SK-N-SH (cell line): ENCODE measurements at regions of chr7 and their contacts with region 1.

Region 1: DNA sequence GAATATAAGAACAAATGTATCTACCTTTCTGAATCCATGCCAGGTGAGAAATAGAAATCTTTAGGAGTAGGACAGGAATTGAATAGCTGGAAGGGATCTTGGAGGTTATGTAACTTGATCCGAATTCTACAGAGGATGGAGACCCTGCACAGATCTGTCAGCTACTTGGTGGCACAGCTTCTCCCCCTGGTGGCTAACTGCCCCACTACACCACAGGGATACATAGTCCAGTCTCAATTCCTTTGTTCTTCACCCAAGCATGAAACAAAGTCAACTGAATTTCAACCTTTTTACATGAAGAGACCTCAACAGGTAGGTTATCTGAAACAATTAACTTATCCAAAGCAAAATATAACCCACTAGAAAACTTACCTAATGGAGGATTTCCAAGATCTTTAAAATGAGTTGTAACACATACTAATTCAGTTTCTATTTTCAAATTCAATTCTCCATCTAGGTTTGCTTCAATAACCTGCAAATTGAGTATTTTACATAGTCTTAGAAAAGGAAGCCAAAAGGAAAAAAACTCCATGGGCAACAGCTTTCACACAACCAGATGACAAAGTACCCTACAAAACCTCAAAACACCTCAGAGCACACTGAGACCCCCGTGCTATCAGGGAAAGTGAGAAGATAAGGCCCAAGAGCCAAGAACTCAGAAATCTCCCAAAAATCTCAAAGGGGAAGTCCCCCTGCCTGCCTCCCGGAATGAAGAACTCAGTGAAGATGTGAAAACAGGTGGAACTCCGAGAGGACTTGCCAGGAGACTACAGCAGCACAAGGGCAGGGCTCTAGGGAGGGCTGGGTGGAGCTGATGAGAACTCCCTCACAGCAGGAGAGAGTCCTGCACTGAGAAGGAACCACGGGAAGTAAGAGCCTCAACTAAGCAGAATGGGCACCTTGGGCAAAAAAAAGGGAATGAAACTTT is 10.3 kb downstream of the HUS1 start:
- DNase-seq: peak; percentile 89
- H3K4me3 ChIP-seq: no peak overlapping the region; a peak in 1 of 4 replicates
- H3K27ac ChIP-seq: no peak overlapping the region
- H3K4me1 ChIP-seq: peaks cover 0 to 2% of the 10 kb centered on the region in 2 experiments; a peak in 2 of 4 replicates
- H3K27me3 ChIP-seq: no peaks in the 10 kb centered on the region
- CTCF ChIP-seq: peak; percentile 100
- EP300 ChIP-seq: no peak
- RAD21 ChIP-seq: peak; percentile 82

Region 2: GRCh38 chr7:47418601-47419381 is 550.3 kb before region 1 on chr7:
- CTCF ChIA-PET with region 1: no interaction called
- POLR2A ChIA-PET with region 1: no interaction called
- DNase-seq: no peak
- H3K4me3 ChIP-seq: no peak overlapping the region
- H3K27ac ChIP-seq: no peak overlapping the region
- H3K4me1 ChIP-seq: peaks cover 0 to 3% of the 10 kb centered on the region in 2 experiments; a peak in 1 of 4 replicates
- H3K27me3 ChIP-seq: no peaks in the 10 kb centered on the region
- CTCF ChIP-seq: no peak
- EP300 ChIP-seq: no peak
- RAD21 ChIP-seq: no peak

Region 3: DNA sequence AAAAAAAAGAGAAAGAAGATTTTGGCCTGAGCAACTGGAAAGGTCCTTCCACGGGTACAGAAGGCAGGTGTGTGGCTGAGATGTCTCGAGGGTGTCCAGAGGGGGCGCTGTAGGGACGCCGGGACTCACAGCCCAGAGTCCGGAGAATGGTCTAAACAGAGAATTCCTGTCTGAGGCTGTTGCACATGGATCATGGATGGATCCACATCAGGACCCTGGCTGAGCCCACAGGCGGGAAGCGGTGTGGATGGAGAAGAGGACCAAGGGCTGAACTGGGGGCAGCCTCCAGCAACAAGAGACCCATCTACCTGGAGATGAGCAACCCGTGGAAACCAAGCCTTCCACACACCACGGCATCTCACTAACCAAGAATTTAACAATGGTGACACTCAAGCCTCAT is 75.9 kb before region 1 on chr7:
- CTCF ChIA-PET with region 1: no interaction called
- POLR2A ChIA-PET with region 1: no interaction called
- DNase-seq: peak; percentile 45
- H3K4me3 ChIP-seq: no peak overlapping the region
- H3K27ac ChIP-seq: no peak overlapping the region
- H3K4me1 ChIP-seq: no peaks in the 10 kb centered on the region; a peak in 1 of 4 replicates
- H3K27me3 ChIP-seq: peaks cover 21% of the 10 kb centered on the region; the same call in 1 of the 2 replicates
- CTCF ChIP-seq: peak; percentile 55
- EP300 ChIP-seq: no peak
- RAD21 ChIP-seq: no peak

Region 4: GRCh38 chr7:47937065-47937683 is 31.9 kb before region 1 on chr7:
- CTCF ChIA-PET with region 1: interaction called, 13 read pairs
- POLR2A ChIA-PET with region 1: no interaction called
- DNase-seq: no peak
- H3K4me3 ChIP-seq: no peak overlapping the region
- H3K27ac ChIP-seq: no peak overlapping the region
- H3K4me1 ChIP-seq: peaks cover 18 to 26% of the 10 kb centered on the region in 2 experiments
- H3K27me3 ChIP-seq: no peaks in the 10 kb centered on the region
- CTCF ChIP-seq: no peak
- EP300 ChIP-seq: no peak
- RAD21 ChIP-seq: no peak

Region 5: DNA sequence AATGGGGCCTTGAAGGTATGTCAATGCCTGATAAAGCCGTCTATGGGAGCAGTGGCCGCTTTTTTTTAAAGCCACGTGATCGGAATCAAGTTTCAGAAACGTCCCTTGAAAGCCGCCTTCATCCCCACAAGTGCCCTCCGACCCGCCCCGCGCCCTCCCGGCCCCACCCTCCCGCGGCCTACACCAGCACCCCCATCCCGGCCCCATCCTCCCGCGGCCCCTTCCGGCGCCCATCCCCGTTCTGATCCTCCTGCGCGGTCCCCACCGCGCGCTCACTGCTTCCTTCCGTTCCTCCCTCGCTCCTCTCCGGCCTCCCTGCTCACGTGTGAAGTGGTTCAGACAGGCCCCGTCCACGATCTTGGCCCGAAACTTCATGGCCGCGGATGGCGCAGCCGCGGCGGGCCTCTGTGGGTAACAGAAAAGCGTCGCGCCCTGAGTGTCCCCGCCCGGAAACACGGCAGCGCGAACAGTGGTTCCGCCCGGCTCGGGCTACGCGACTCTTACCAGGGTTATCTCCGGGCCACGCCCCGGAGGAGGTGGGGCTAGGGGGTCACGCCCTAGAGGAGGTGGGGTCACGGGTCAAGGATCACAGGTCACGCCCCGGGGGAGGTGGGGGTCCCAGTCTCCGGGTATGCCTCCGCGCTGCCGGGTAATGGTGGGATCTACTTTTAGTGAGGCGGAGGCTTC is 10.2 kb after region 1 on chr7 and contains the start of gene HUS1:
- CTCF ChIA-PET with region 1: interaction called, 20 read pairs
- POLR2A ChIA-PET with region 1: no interaction called
- DNase-seq: peak; percentile 98
- H3K4me3 ChIP-seq: peak within 1 kb of the TSS; percentile 75 to 87
- H3K27ac ChIP-seq: peak within 1 kb of the TSS; percentile 76 to 83
- H3K4me1 ChIP-seq: peaks cover 8% of the 10 kb centered on the region in 2 experiments; a peak in 3 of 4 replicates
- H3K27me3 ChIP-seq: no peaks in the 10 kb centered on the region
- CTCF ChIP-seq: no peak
- EP300 ChIP-seq: peak in 1 of 2 experiments; percentile 54; a peak in 1 of 4 replicates
- RAD21 ChIP-seq: no peak
- polyA plus RNA-seq, gene HUS1: 17.8 and 22.9 TPM in 2 replicates

Region 6: DNA sequence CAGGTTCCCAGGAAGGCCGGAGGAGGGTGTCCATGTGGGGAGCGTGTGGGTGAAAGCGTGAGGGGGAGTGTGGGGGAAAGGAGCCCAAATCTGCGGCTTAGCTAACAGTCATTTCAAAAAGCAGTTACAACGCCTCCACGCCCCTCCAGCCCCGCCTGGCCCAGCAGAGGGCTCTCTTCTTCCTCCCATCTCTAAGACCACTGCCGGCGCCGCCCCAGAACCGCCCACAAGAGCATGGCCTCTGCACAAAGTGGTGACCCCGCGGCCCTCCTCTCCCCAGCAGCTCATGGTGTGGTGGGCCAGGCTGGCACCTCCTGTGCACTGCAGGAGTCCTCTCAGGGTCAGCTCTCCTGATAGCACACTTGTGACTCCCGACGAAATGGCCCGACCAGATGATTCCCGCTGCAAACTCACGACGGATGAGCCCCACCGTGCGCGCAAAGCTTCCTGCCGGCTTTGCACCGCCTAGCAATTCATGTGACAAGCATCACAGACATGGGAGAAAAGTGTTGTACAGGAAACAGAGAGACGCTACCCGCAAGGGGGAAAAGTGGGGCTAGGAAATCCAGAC is 22.7 kb after region 1 on chr7:
- CTCF ChIA-PET with region 1: interaction called, 12 read pairs
- POLR2A ChIA-PET with region 1: no interaction called
- DNase-seq: peak; percentile 59
- H3K4me3 ChIP-seq: no peak overlapping the region
- H3K27ac ChIP-seq: no peak overlapping the region
- H3K4me1 ChIP-seq: no peaks in the 10 kb centered on the region; a peak in 1 of 4 replicates
- H3K27me3 ChIP-seq: no peaks in the 10 kb centered on the region; the same call in 1 of the 2 replicates
- CTCF ChIP-seq: peak; percentile 51
- EP300 ChIP-seq: no peak
- RAD21 ChIP-seq: peak; percentile 49

Region 7: DNA sequence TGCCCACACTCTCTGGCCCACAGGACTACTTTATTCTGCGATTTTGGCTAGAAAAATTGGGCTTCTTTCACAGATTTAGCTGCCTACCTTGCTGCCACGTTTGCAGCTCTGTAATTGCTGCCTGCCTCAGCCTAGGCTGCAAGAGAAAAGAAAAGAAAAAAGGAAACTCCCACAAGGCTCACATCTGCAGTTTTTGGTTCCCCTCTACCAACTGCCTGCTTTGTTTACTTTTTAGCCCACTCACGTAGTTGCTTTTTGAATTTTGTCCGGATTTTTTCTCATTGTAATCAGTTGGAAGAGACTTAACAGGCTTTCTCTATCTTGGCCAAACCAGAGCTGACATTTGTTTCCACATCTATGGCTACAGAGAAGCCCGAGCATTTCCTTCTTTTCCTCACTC is 35.5 kb after region 1 on chr7:
- CTCF ChIA-PET with region 1: no interaction called
- POLR2A ChIA-PET with region 1: no interaction called
- DNase-seq: no peak
- H3K4me3 ChIP-seq: no peak overlapping the region
- H3K27ac ChIP-seq: no peak overlapping the region
- H3K4me1 ChIP-seq: no peaks in the 10 kb centered on the region
- H3K27me3 ChIP-seq: peaks cover 5% of the 10 kb centered on the region; the same call in 1 of the 2 replicates
- CTCF ChIP-seq: no peak
- EP300 ChIP-seq: no peak
- RAD21 ChIP-seq: no peak